ENCODE measurements at regions of chr13 and their contacts with region 1.

Region 1: DNA sequence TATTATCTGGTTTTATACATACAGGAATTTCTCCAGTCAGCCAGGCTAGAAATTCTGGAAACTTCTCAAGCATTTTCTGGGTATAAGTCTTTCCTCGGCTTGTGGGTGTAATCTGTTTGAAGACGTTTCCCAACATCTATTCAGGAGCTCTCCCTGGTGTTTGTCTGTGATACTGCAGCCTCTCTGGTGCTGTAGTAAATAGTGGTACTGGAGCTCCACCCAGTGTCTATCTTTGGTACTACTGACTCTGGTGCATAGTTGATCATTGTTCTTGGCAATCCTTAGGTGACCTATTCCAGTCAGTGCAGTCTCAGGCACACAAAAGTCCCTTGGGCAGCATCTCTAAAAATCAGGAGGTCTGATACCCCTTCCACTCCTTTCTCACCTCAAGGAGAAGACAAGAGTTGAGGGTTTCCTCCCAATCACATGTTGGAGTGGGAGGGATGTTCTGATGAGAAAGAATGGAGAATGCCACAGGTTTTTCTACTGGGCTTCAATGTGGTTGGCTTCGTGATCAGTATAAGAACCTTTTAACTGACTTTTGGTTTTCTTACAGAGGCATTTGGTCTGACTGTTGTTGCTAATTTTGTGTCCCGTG is 115.5 kb downstream of the CYSLTR2 start:
- DNase-seq: peak; percentile 96
- H3K4me3 ChIP-seq: no peak overlapping the region
- H3K27ac ChIP-seq: no peak overlapping the region
- H3K4me1 ChIP-seq: no peaks in the 10 kb centered on the region
- H3K27me3 ChIP-seq: no peaks in the 10 kb centered on the region
- CTCF ChIP-seq: peak in 2 of 3 experiments; percentile 98 to 100
- EP300 ChIP-seq: no peak
- POLR2A ChIP-seq: no peak

Region 2: GRCh38 chr13:48595431-48596429 is 173.5 kb before region 1 on chr13:
- intact Hi-C with region 1: loop called (anchors 5 kb)
- DNase-seq: peak; percentile 91
- H3K4me3 ChIP-seq: no peak overlapping the region
- H3K27ac ChIP-seq: no peak overlapping the region
- H3K4me1 ChIP-seq: peaks cover 0 to under 1% (median 0%) of the 10 kb centered on the region in 4 donors
- H3K27me3 ChIP-seq: no peaks in the 10 kb centered on the region
- CTCF ChIP-seq: peak; percentile 40 to 62 (median 59)
- EP300 ChIP-seq: no peak
- POLR2A ChIP-seq: no peak

Region 3: GRCh38 chr13:48749699-48750473 is 19.3 kb before region 1 on chr13:
- intact Hi-C with region 1: loop called (anchors 2 kb)
- DNase-seq: peak; percentile 96
- H3K4me3 ChIP-seq: no peak overlapping the region
- H3K27ac ChIP-seq: peak overlapping the region; percentile 71 to 85 (median 76)
- H3K4me1 ChIP-seq: peaks cover 22 to 31% (median 26%) of the 10 kb centered on the region in 4 donors
- H3K27me3 ChIP-seq: no peaks in the 10 kb centered on the region
- CTCF ChIP-seq: peak; percentile 50 to 68 (median 67)
- EP300 ChIP-seq: no peak
- POLR2A ChIP-seq: no peak